Activated naive CD4-positive, alpha-beta T cell treated with anti-CD3 and anti-CD28 coated beads for 36 hours (primary cell): ENCODE measurements at regions of chr17 and their contacts with region 1.

Region 1: DNA sequence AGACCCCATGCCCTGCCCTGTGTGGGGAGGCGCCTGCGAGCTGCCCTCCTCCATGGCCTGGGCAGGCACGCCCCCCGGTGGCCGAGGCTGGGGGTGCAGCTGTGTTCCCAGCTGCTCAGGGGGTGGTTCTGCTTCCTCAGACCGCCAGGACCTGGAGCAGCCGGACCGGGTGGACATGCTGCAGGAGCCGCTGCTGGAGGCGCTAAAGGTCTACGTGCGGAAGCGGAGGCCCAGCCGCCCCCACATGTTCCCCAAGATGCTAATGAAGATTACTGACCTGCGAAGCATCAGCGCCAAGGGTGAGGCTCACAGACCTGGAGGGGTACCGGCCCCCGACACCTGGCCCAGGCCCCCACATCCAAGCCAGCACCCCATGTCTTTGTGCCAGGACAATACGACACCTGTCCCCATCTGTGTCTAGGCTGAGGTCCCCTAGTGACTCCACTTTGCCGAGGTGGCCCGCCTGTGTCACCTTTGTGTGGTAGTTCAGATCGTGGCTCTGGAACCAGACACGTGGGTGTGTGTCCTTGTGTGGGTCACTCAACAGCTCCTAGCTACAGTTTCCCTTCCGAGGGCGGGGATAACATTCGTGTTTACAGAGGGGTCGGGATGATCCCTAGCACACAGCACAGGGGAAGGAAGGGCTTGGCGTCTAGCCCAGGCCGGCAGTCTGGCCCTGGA is 9.3 kb downstream of the GJD3 start:
- DNase-seq: peak; percentile 82
- H3K4me3 Mint-ChIP-seq: no peak overlapping the region
- H3K27ac Mint-ChIP-seq: no peak overlapping the region
- H3K4me1 Mint-ChIP-seq: peaks cover 9% of the 10 kb centered on the region
- H3K27me3 Mint-ChIP-seq: peaks cover 2% of the 10 kb centered on the region

Region 2: GRCh38 chr17:40203131-40203530 is 152.1 kb before region 1 on chr17:
- CTCF ChIA-PET with region 1: interaction called, 25 read pairs
- intact Hi-C with region 1: loop called (anchors 1 kb)
- DNase-seq: no peak
- H3K4me3 Mint-ChIP-seq: no peak overlapping the region
- H3K27ac Mint-ChIP-seq: no peak overlapping the region
- H3K4me1 Mint-ChIP-seq: no peaks in the 10 kb centered on the region
- H3K27me3 Mint-ChIP-seq: no peaks in the 10 kb centered on the region

Region 3: DNA sequence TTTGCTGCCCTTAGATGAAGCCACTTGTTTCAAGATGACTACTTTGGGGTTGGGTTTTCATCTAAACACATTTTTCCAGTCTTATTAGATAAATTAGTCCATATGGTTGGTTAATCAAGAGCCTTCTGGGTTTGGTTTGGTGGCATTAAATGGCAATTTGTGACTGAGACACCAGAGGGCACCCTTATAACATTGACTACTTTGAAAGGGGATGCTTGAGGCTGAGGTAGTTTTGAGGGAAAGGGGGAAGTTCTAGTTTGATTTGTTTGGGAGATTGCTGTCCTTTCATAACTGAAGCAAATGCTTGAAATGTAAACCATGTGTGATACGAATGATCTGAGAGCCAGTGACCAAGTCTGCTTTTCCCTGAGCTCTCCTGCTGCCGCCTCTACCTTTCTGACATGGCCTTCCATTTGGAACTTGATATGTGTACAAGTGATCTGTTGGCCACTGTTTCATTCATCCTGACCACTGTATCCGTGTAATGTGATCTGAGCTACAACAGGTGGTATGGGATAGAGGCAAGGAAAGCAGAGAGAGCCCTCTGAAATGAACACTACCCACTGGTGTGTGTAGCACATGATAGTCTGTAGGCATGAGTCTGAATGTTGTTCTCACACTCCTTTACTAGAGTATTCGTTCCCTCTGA is 52.1 kb before region 1 on chr17:
- CTCF ChIA-PET with region 1: interaction called, 178 read pairs
- intact Hi-C with region 1: loop called (anchors 1 kb)
- DNase-seq: peak; percentile 61
- H3K4me3 Mint-ChIP-seq: no peak overlapping the region
- H3K27ac Mint-ChIP-seq: no peak overlapping the region
- H3K4me1 Mint-ChIP-seq: peaks cover 10% of the 10 kb centered on the region
- H3K27me3 Mint-ChIP-seq: no peaks in the 10 kb centered on the region

Region 4: DNA sequence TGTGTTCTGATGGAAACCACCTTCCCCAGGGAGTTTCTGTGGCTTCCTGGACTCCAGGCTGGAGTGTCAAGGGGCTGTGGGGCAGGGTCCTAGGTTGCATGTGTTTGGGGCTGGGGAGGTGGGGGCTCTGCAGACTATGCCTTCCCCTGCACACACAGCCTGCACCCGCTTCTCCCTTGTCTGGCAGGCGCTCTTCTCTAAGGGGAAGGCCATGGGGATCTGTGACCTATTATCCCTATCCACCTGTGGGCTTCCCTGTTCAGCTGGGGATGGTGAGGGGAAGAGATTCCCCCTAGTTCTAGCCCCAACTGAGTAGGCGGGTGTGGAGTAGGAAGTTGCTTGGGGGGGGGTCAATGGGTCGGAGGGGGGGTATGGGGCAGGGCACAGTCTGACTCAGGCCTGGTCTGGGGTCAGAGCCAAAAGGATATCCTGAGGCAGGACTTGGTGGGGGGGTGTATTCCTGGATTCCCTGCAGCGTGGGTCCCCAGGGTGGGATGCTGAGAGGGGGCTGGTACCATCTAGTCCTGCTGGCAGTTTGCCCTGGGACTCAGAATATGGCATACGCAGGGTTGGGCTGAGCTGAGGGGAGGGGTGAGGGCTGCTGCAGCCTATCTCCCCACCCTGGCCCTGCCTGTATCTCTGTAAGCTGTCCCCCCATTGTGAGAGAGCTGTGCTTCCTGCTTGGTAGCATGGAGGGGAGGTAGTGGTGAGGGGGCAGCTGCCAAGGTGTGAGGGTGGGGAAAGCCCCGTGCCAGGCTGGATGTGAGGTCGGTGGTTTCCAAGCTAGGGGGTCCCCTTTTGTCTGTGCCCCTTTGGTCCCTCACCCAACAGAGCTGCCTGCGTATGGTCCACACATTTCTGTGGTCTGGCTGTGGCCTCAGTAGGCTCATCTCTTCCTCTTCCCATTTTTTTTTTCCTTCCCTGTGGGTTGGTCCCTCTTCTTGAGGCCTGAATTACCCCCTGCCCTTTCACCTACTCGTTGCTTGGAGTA is 31.6 kb before region 1 on chr17:
- CTCF ChIA-PET with region 1: interaction called, 29 read pairs
- intact Hi-C with region 1: no loop called
- DNase-seq: peak; percentile 80
- H3K4me3 Mint-ChIP-seq: peak overlapping the region; percentile 85
- H3K27ac Mint-ChIP-seq: peak overlapping the region; percentile 93
- H3K4me1 Mint-ChIP-seq: peaks cover 90% of the 10 kb centered on the region
- H3K27me3 Mint-ChIP-seq: no peaks in the 10 kb centered on the region

Region 5: DNA sequence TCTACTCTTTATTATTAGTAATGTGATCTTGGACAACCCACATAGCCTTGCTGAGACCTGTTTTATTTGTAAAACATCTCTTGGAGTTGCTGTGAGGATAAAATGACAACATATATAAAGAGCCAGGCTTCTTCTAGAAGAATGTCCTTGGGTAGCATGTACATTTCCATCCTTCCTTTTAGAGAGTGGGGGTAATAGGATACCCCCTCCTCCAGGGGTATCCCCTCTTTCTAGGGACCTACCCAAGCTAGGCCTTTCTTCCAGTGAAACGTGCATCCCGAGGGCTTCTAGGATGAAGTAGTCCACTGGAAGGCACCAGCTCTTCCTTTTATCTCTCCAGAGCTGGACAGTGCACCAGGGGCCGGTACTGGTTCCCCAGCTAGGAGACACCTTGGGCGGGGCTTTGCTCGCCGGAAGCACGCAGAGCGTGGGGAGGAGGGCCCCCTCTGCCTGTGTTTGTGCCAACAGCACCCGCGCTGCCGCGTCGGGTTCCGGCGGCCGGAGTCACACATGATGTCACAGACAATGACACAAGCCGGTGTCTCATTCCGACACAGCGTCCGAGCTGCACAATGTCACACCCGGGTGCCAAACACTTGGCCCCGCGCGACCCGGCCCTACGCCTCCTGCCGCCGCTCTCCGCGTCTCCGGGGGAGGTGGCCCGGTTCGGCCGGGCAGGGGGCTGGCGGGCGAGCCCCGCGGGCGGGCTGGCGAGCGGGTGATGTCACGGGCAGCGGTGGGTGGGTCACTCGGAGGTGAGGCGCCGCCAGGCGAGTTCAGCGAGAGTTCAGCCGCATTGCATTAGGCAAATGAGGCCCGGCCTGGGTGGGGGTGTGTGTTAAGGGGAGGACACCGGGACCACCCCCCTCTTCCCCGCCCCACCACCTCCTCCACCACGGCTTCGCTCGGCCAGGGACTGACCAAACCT is 14.1 kb before region 1 on chr17:
- CTCF ChIA-PET with region 1: interaction called, 15 read pairs
- intact Hi-C with region 1: no loop called
- DNase-seq: peak; percentile 91
- H3K4me3 Mint-ChIP-seq: peak overlapping the region; percentile 38
- H3K27ac Mint-ChIP-seq: peak overlapping the region; percentile 61
- H3K4me1 Mint-ChIP-seq: peaks cover 71% of the 10 kb centered on the region
- H3K27me3 Mint-ChIP-seq: no peaks in the 10 kb centered on the region

Region 6: GRCh38 chr17:40422990-40423616 is 67.8 kb after region 1 on chr17:
- CTCF ChIA-PET with region 1: no interaction called
- intact Hi-C with region 1: no loop called
- DNase-seq: no peak
- H3K4me3 Mint-ChIP-seq: no peak overlapping the region
- H3K27ac Mint-ChIP-seq: no peak overlapping the region
- H3K4me1 Mint-ChIP-seq: peaks cover 47% of the 10 kb centered on the region
- H3K27me3 Mint-ChIP-seq: no peaks in the 10 kb centered on the region

Region 7: DNA sequence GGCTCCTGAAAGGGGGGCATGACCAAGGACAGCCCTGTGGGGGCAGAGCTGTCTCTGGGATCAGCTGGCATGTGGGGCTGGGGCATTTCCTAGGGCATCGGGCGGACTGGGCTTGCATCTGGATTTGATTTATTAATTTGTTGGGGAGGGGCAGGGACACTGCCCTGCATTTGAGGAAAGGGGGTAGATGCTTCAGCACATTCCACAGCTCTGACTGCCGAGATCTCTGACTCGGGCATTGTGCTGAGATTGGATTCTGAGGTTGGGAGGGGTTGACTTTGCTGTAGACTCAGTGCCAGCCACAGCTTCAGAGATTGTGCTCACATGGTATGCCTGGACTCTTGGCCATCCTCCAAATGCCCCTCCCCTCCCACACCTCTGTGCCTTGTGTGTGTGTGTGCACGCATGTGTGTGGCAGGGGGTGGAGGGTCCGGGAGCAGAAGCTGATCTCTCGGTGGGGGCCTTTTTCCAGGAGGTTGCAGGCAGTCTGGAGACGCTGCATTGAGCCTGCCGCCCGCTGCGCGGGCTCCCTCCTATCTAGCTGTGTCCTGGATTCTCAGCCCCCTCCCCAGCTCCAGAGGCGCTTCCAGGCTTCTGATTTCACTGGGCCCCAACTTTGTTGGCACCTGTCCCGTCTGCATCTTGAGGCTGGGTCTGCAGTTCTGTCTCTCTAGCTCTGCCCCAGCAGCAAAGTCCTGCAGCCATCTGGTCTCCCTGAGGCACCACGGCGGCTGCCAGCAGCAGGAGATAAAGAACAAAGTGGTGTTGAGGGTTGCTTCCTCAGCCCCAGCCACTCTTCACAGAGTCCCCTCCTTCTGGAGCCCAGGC is 102.9 kb after region 1 on chr17:
- CTCF ChIA-PET with region 1: no interaction called
- intact Hi-C with region 1: no loop called
- DNase-seq: no peak
- H3K4me3 Mint-ChIP-seq: no peak overlapping the region
- H3K27ac Mint-ChIP-seq: no peak overlapping the region
- H3K4me1 Mint-ChIP-seq: no peaks in the 10 kb centered on the region
- H3K27me3 Mint-ChIP-seq: no peaks in the 10 kb centered on the region